Spleen (tissue), 13 donors: ENCODE measurements at regions of chr18 and their contacts with region 1.

Region 1: DNA sequence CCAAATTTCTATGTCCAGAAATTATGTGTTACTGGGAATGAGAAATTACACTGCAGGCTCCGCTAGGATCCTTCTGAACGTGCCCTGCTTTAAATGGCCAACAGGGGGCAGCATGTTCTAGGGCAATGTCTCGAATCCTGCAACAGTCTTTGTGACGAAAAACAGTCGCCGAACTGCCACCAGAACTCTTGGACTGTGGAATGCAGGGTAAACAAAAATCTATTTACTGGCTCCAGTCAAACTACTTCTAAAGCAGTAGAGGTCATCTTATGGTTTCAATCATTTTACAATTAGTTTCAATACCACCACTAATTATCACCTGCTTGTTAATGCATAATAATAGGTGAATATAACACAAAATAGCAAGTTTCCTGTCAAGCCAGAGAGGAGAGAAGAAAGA is 9.8 kb upstream of the ZNF397 start:
- DNase-seq: peak; percentile 88
- H3K4me3 ChIP-seq: peak overlapping the region in 1 of 8 donors; percentile 49
- H3K27ac ChIP-seq: no peak overlapping the region
- H3K4me1 ChIP-seq: peaks cover 0 to 8% (median 6%) of the 10 kb centered on the region in 6 donors
- H3K27me3 ChIP-seq: no peaks in the 10 kb centered on the region
- CTCF ChIP-seq: peak; percentile 72 to 96 (median 91)
- POLR2A ChIP-seq: no peak

Region 2: GRCh38 chr18:35029770-35030169 is 201.3 kb before region 1 on chr18:
- intact Hi-C with region 1: loop called (anchors 10 kb)
- DNase-seq: no peak
- H3K4me3 ChIP-seq: peak overlapping the region; percentile 2 to 61 (median 26)
- H3K27ac ChIP-seq: peak overlapping the region; percentile 71 to 88 (median 86)
- H3K4me1 ChIP-seq: peaks cover 9 to 44% (median 29%) of the 10 kb centered on the region in 6 donors
- H3K27me3 ChIP-seq: no peaks in the 10 kb centered on the region
- CTCF ChIP-seq: peak in 10 of 11 experiments; percentile 16 to 66 (median 52)
- POLR2A ChIP-seq: no peak

Region 3: DNA sequence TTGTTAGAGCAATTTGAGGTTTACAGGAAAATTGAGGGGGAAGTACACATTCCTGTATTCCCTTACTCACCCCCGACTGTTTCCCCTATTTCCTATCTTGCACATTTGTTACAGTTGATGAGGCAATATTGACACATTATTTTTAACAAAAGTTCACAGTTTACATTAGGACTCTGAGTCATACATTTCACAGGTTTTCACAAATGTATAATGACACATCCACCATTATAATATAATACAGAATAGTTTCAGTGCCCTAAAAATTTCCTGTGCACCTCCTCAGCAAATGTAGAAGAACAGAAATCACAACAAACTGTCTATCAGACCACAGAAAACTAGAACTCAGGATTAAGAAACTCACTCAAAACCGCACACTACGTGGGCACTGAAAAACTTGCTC is 580.8 kb after region 1 on chr18:
- intact Hi-C with region 1: no loop called
- DNase-seq: no peak
- H3K4me3 ChIP-seq: no peak overlapping the region
- H3K27ac ChIP-seq: peak overlapping the region in 3 of 8 donors; percentile 31 to 78 (median 75)
- H3K4me1 ChIP-seq: peaks cover 0 to 32% (median 11%) of the 10 kb centered on the region in 6 donors
- H3K27me3 ChIP-seq: peaks cover 0 to 6% (median 0%) of the 10 kb centered on the region in 7 donors
- CTCF ChIP-seq: no peak
- POLR2A ChIP-seq: no peak